ENCODE measurements at regions of chr22 and their contacts with region 1.

Region 1: DNA sequence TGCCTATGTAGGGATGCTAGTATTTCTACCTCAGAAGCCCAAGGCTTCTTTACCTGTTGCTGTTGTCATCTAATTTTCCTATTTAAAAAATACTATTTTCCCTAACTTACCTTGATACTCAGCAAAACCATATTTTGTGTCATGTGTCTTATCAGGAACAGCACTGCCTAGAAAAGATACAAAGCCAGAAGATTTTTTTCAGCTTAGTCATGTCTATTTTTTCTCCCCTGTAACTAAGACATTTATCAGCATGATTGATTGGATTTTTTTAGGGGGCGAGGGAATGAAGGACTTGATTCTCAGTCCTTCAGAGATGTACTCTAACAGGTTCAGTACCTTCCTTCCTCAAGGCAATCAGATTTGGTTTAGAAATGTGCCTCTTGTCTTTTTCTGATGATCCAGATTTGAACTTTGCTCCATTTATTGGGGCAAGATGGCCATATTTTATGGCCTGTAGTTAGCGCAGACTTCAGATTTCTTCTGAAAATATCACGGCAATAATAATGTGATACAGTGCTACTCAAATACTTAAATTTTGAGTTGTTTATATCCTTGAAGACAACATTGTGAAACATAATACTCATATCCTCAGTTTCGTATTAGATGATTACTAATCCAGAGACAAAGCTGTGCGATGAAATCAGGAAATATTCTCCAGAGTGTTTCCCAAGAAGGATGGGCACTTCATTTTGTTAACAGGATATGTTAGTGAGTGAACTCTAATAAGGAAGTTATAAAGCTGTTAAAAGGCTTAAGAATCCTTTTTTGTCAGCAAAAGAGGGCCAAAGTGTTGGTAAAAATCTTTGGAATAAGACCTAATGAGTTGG is 3.8 kb upstream of the PIK3IP1 start:
- DNase-seq: no peak
- ATAC-seq: no peak
- H3K4me3 ChIP-seq: peak overlapping the region in 2 of 12 donors; percentile 1 to 15
- H3K27ac ChIP-seq: peak overlapping the region in 11 of 12 donors; percentile 0 to 80 (median 58)
- H3K4me1 ChIP-seq: peaks cover 2 to 54% (median 33%) of the 10 kb centered on the region in 12 donors
- H3K27me3 ChIP-seq: no peaks in the 10 kb centered on the region
- CTCF ChIP-seq: no peak
- POLR2A ChIP-seq: no peak

Region 2: GRCh38 chr22:31148953-31149627 is 147.0 kb before region 1 on chr22:
- intact Hi-C with region 1: no loop called
- DNase-seq: peak; percentile 74 to 79 (median 76)
- ATAC-seq: peak; percentile 91 to 97 (median 96)
- H3K4me3 ChIP-seq: no peak overlapping the region
- H3K27ac ChIP-seq: peak overlapping the region; percentile 37 to 85 (median 74)
- H3K4me1 ChIP-seq: peaks cover 0 to 14% (median 10%) of the 10 kb centered on the region in 12 donors
- H3K27me3 ChIP-seq: no peaks in the 10 kb centered on the region
- CTCF ChIP-seq: peak; percentile 81 to 98 (median 94)
- POLR2A ChIP-seq: no peak

Region 3: DNA sequence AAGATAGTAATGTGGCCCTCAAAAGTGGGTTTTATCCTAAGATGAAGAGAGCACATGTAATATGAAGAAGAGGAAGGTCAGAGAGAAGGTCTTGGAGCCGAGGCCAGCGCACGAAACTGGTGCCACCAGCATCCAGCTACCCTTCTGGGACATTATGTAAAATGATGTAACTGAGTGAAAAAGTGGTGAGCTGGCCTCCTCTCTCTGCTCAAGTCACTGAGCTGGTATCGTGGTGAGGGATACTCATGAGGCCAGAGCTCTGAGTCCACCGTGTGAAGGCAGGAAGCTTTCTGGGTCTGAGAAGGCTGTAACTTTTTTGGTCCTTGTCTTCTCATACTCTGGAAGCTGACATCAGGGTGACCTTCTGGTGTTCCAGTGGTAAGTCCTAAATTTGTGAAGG is 111.0 kb before region 1 on chr22:
- intact Hi-C with region 1: no loop called
- DNase-seq: no peak
- ATAC-seq: no peak
- H3K4me3 ChIP-seq: no peak overlapping the region
- H3K27ac ChIP-seq: no peak overlapping the region
- H3K4me1 ChIP-seq: peaks cover 0 to 6% (median 0%) of the 10 kb centered on the region in 12 donors
- H3K27me3 ChIP-seq: no peaks in the 10 kb centered on the region
- CTCF ChIP-seq: no peak
- POLR2A ChIP-seq: no peak

Region 4: DNA sequence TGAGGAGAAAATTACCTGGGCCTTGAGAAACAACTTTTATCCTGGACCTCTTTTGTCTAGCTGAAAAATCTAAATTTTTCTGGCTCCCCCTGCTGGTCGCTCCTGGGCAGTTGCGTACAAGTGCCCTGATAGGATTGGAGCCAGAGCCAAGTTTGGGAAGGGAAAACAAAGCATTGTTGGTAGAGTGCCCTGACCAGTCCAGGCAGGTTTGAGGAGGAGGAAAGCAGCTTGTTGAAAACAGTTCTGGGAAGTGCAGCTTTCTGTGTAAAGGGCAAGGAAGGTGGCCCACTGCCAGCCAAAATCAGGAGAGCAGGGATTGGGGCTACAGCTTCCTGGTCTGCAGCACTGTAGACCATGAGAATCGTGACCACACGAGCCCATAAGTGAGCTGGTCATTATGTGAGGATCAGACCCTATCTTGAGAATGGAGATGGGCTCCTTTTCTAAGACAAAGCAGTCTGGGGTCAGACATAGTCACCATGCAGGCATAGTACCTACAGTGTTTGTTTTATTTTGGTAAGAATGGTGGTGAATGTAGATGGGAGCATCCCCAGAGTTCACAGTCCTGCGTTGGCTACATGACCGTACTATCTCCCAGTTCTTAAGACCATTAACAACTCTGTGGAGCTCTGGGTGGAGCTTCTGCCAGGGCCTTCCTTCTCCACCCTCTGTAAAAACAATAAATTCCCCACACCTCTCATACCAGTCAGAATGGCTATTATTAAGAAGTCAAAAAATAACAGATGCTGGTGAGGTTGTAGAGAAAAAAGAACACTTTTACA is 17.5 kb after region 1 on chr22:
- intact Hi-C with region 1: loop called in 4 of 10 experiments (anchors 2 kb)
- DNase-seq: peak; percentile 67 to 80 (median 72)
- ATAC-seq: peak; percentile 93 to 98 (median 95)
- H3K4me3 ChIP-seq: no peak overlapping the region
- H3K27ac ChIP-seq: peak overlapping the region in 10 of 12 donors; percentile 24 to 79 (median 54)
- H3K4me1 ChIP-seq: peaks cover 0 to 16% (median 7%) of the 10 kb centered on the region in 12 donors
- H3K27me3 ChIP-seq: no peaks in the 10 kb centered on the region
- CTCF ChIP-seq: peak; percentile 79 to 96 (median 89)
- POLR2A ChIP-seq: no peak